A673 (cell line): ENCODE measurements at regions of chr11 and their contacts with region 1.

Region 1: DNA sequence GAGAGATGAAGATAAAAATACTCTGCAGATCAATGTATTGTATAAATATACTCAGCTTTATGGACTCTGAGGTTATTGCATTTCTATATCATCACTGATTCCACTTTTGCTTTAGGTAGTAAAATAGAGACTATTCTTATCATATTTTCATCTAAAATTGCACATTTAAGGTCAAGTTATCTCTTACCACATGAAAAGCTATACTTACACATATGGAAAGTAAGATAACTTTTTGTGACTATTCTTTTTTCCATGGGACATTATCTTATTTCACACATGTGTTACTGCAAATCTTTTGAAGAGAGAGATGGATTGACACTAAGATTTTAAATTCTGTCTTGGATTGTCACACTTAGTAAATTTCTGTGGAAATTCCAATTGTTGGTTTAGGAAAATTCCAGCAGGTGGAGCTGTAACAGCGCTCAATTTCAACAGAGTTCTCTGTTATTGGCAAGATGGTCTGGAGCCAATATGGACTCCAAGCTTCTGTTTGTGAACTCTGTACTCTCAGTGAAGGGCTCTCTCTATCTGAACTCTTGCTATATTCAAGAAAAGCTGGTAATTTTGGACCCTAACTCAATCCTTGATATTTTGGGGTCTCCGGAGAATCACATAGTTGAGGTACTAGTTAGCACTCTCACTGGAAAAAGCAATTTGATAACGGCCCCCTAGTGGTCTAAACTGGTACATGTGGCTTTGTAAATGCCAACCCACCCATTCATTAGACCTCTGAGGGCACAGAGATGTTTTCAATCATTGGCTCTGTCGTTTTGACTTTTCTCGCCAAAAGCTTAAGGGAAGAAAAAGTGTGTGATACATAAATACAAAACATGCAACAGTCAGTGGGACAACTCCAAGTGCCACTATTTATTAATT is 429.7 kb downstream of the ETS1 start:
- DNase-seq: peak; percentile 86
- H3K4me3 ChIP-seq: no peak overlapping the region
- H3K27ac ChIP-seq: no peak overlapping the region
- H3K4me1 ChIP-seq: no peaks in the 10 kb centered on the region
- H3K27me3 ChIP-seq: peaks cover 14% of the 10 kb centered on the region
- CTCF ChIP-seq: peak; percentile 98

Region 2: DNA sequence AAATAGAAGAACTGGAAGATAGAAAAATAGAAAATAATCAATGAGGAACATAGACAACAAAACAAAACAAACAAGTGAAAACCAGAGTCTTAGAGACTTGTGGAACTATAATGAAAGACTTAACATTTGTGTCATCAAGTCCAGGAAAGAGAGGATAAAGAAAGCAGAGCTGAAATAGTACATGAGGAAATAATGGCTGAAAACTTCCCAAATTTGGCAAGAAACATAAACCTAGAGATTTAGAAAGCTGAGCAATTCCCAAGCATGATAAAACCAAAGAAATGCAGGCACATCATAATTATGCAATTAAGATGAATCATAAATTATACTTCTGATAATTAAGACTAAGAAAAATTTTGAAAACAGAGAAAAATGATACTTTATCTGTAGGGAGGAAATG is 184.8 kb before region 1 on chr11:
- CTCF ChIA-PET with region 1: no interaction called
- POLR2A ChIA-PET with region 1: no interaction called
- intact Hi-C with region 1: no loop called
- DNase-seq: no peak
- H3K4me3 ChIP-seq: no peak overlapping the region
- H3K27ac ChIP-seq: no peak overlapping the region
- H3K4me1 ChIP-seq: no peaks in the 10 kb centered on the region
- H3K27me3 ChIP-seq: peaks cover 14% of the 10 kb centered on the region
- CTCF ChIP-seq: no peak

Region 3: GRCh38 chr11:127993788-127994187 is 163.9 kb before region 1 on chr11:
- CTCF ChIA-PET with region 1: no interaction called
- POLR2A ChIA-PET with region 1: no interaction called
- intact Hi-C with region 1: no loop called
- DNase-seq: peak; percentile 7
- H3K4me3 ChIP-seq: no peak overlapping the region
- H3K27ac ChIP-seq: no peak overlapping the region
- H3K4me1 ChIP-seq: no peaks in the 10 kb centered on the region
- H3K27me3 ChIP-seq: peaks cover 59% of the 10 kb centered on the region
- CTCF ChIP-seq: peak; percentile 44

Region 4: DNA sequence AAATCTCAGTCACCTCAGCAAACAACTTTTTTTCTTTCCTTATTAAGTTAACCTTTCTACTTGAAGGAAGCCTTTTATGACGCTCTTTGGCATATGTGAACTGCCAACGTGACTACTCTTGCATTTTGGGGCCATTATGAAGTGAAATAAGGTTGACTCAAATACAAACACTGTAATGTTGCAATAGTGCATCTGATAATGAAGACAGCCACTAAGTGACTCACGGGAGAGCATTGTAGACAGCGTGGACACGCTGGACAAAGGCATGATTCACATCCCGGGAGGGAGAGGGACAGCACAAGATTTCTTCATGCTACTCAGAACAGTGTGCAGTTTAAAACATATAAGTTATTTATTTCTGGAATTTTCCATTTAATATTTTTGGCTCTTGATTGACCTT is 131.1 kb before region 1 on chr11:
- CTCF ChIA-PET with region 1: interaction called, 6 read pairs
- POLR2A ChIA-PET with region 1: no interaction called
- intact Hi-C with region 1: loop called (anchors 1 kb)
- DNase-seq: no peak
- H3K4me3 ChIP-seq: no peak overlapping the region
- H3K27ac ChIP-seq: no peak overlapping the region
- H3K4me1 ChIP-seq: no peaks in the 10 kb centered on the region
- H3K27me3 ChIP-seq: peaks cover 70% of the 10 kb centered on the region
- CTCF ChIP-seq: no peak

Region 5: GRCh38 chr11:128146926-128147605 is 10.6 kb before region 1 on chr11:
- CTCF ChIA-PET with region 1: no interaction called
- POLR2A ChIA-PET with region 1: no interaction called
- intact Hi-C with region 1: loop called (anchors 1 kb)
- DNase-seq: no peak
- H3K4me3 ChIP-seq: no peak overlapping the region
- H3K27ac ChIP-seq: no peak overlapping the region
- H3K4me1 ChIP-seq: no peaks in the 10 kb centered on the region
- H3K27me3 ChIP-seq: peaks cover 21% of the 10 kb centered on the region
- CTCF ChIP-seq: no peak